GM10248 (cell line): ENCODE measurements at regions of chr1 and their contacts with region 1.

Region 1: GRCh38 chr1:43073490-43074230 is 98.4 kb downstream of the EBNA1BP2 start:
- DNase-seq: peak; percentile 79
- CTCF ChIP-seq: peak; percentile 81

Region 2: DNA sequence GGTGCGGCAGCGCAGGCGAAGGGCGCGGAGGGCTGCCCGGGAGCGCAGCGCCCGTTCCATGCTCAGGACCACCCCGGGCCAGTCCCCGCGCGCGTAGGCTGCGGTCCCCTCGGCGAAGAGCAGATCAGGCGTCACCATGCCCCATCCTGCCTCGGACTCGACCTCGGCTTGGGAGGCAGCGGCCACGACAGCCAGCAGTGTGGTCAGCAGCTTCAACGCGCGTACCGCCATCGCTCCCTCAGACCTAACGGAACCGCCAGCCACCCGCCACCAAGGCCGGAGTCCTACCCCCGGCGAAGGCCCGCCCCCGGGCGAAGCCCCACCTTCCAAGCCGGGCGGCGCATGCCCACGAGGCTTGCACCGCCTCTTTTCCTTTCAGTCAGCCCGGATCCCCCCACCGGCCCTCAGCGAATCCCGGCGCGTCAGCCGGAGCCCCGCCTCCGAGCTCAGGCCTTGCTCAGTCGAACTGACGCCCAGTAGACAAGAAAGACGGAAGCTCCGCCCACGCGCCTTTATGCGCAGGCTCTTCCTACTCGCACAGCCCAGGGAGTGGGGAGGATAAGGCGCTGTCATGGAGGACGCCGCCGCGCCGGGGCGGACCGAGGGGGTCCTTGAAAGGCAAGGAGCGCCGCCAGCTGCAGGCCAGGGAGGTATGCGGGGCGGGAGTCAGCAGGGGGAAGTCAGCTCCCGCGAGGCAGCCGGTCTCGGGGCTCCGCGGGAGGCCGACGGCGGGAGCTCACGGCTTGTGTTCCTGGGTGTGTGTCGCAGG is 306.7 kb before region 1 on chr1 and contains the starts of genes C1orf50 and P3H1:
- CTCF ChIA-PET with region 1: interaction called, 14 read pairs
- POLR2A ChIA-PET with region 1: no interaction called
- DNase-seq: peak; percentile 98
- CTCF ChIP-seq: no peak

Region 3: GRCh38 chr1:42846257-42847110 is 227.2 kb before region 1 on chr1 and contains the start of gene ZNF691:
- CTCF ChIA-PET with region 1: interaction called, 25 read pairs
- POLR2A ChIA-PET with region 1: no interaction called
- DNase-seq: peak; percentile 96
- CTCF ChIP-seq: peak; percentile 42

Region 4: GRCh38 chr1:42936309-42937078 is 137.2 kb before region 1 on chr1:
- CTCF ChIA-PET with region 1: interaction called, 23 read pairs
- POLR2A ChIA-PET with region 1: no interaction called
- DNase-seq: no peak
- CTCF ChIP-seq: no peak

Region 5: GRCh38 chr1:43008115-43009060 is 65.3 kb before region 1 on chr1:
- CTCF ChIA-PET with region 1: no interaction called
- POLR2A ChIA-PET with region 1: no interaction called
- DNase-seq: no peak
- CTCF ChIP-seq: no peak

Region 6: DNA sequence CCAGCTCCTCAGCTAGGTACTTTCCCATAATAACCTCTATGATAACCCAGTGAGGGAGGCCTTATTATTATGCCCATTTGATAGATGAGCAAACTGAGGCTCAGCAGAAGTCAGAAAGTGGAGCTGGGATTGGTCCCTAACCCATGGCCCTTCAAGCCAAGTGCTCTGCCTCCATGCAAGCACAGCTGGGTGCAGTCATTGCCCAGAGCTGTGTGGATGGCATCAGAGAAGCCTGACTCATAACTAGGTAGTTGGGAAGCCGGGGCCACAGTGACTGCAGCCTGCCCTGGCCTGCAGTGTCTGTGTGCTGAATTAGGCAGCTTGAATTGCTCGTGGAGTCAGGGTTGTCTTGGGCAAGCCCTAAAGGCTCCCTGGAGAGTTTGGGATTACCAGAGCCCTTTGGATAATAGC is 25.1 kb before region 1 on chr1:
- CTCF ChIA-PET with region 1: interaction called, 15 read pairs
- POLR2A ChIA-PET with region 1: no interaction called
- DNase-seq: no peak
- CTCF ChIP-seq: no peak

Region 7: DNA sequence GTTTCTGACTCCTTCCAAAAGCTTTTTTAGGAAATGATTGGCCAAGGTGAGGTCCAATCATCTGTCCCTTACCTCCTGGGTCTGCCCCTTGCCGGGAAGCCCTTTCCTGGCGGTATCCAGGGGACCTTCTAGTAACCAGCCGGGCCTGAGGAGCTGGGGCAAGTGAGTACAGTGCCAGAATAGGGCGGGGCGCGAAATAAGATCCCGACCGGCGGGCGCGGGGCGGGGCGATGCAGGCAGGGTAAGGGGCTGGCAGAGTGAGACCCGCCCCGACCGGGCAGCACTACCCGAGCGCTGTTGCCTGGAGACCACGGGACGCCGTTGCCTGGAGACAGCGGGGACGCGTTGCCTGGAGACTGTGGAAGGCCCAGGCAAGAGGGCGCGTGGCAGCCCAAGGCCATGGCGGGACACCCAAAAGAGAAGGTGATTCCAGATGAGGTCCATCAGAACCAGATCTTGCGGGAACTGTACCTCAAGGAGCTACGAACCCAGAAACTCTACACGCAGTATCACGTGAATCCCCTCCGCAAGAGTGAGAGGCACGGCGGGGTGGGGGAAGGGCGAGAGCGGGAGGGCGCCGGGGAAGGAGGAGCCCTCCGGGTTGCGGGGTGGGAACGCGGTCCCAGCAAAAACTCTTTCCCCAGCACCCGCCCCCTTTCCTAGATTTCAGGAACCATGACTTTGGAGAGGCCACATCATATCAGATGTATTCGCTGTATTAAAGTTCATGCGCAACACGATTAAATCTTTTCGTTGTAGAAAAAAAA is 74.1 kb after region 1 on chr1:
- CTCF ChIA-PET with region 1: no interaction called
- POLR2A ChIA-PET with region 1: no interaction called
- DNase-seq: peak; percentile 39
- CTCF ChIP-seq: no peak

Region 8: DNA sequence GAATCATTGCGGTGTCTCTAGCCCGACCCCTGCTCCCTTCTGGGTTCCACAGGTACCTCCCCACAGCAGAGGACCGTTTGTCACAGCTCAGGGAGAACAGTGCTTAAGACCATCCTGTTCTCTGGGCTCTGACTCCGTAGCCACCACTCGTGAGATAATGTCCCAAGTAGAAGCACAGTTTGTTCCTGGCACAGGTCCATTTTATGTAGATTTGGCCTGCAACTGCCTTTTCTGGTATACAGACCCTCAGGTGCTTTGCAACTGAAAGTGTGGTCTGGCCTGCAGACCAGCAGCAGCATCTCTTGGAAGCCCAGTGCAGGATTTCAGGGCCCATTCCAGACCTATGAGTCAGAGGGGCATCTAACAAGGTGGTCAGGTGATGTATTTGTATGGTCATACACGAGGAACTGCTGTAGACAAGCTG is 167.8 kb after region 1 on chr1:
- CTCF ChIA-PET with region 1: no interaction called
- POLR2A ChIA-PET with region 1: no interaction called
- DNase-seq: no peak
- CTCF ChIP-seq: no peak